ENCODE measurements at regions of chrX and their contacts with region 1.

Region 1: GRCh38 chrX:154428176-154429010 is at the start of gene ATP6AP1:
- DNase-seq: peak; percentile 85
- ATAC-seq: peak; percentile 99
- H3K4me3 ChIP-seq: peak within 1 kb of the TSS; percentile 64 to 74 (median 72)
- H3K27ac ChIP-seq: peak within 1 kb of the TSS; percentile 54
- H3K4me1 ChIP-seq: peaks cover 33% of the 10 kb centered on the region
- H3K27me3 ChIP-seq: no peaks in the 10 kb centered on the region
- CTCF ChIP-seq: no peak
- EP300 ChIP-seq: no peak
- POLR2A ChIP-seq: no peak
- RAD21 ChIP-seq: no peak
- total RNA-seq, gene ATP6AP1: 23.1 and 56.7 TPM in 2 replicates

Region 2: GRCh38 chrX:154327038-154327820 is 101.2 kb before region 1 on chrX:
- CTCF ChIA-PET with region 1: no interaction called
- POLR2A ChIA-PET with region 1: no interaction called
- in situ Hi-C with region 1: no loop called
- intact Hi-C with region 1: no loop called
- DNase-seq: no peak
- ATAC-seq: no peak
- H3K4me3 ChIP-seq: no peak overlapping the region
- H3K27ac ChIP-seq: no peak overlapping the region
- H3K4me1 ChIP-seq: no peaks in the 10 kb centered on the region
- H3K27me3 ChIP-seq: peaks cover 2 to 41% of the 10 kb centered on the region in 2 experiments; a peak in 4 of 5 replicates
- CTCF ChIP-seq: no peak
- EP300 ChIP-seq: no peak
- POLR2A ChIP-seq: no peak
- RAD21 ChIP-seq: no peak

Region 3: GRCh38 chrX:154411322-154411980 is 16.9 kb before region 1 on chrX and contains the start of gene TAFAZZIN:
- CTCF ChIA-PET with region 1: no interaction called
- POLR2A ChIA-PET with region 1: interaction called, 17 read pairs
- in situ Hi-C with region 1: no loop called
- intact Hi-C with region 1: no loop called
- DNase-seq: peak; percentile 21
- ATAC-seq: peak; percentile 58
- H3K4me3 ChIP-seq: peak within 1 kb of the TSS; percentile 57 to 73 (median 72)
- H3K27ac ChIP-seq: peak within 1 kb of the TSS; percentile 67
- H3K4me1 ChIP-seq: peaks cover 25% of the 10 kb centered on the region
- H3K27me3 ChIP-seq: no peaks in the 10 kb centered on the region
- CTCF ChIP-seq: no peak
- EP300 ChIP-seq: no peak
- POLR2A ChIP-seq: peak; percentile 33 to 78; a peak in 3 of 4 replicates
- RAD21 ChIP-seq: no peak
- total RNA-seq, gene TAFAZZIN: 6.3 and 16.8 TPM in 2 replicates

Region 4: DNA sequence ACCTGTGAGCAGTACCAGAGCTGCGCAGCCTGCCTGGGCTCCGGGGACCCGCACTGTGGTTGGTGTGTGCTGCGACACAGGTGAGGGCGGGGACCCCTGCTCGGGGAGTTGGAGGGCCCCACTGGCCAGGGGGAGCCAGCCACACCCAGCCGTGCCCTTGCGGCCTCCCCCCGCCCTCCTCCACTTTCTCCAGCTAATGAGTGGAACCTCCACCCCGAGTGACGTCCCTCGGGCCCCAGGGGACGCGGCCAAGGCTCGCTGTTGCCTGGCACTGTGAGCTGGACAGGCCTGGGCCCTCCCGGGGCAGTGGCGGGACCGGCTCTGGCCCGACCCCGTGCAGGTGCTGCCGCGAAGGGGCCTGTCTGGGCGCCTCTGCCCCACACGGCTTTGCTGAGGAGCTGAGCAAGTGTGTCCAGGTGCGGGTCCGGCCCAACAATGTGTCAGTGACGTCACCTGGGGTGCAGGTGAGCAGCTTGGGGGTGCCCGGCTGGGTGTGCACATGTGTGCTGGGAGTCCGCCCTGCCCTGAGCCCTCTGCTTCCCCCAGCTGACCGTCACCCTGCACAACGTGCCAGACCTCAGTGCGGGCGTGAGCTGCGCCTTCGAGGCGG is 35.3 kb after region 1 on chrX:
- CTCF ChIA-PET with region 1: no interaction called
- POLR2A ChIA-PET with region 1: no interaction called
- in situ Hi-C with region 1: no loop called
- intact Hi-C with region 1: no loop called
- DNase-seq: no peak
- ATAC-seq: no peak
- H3K4me3 ChIP-seq: no peak overlapping the region
- H3K27ac ChIP-seq: no peak overlapping the region
- H3K4me1 ChIP-seq: 0 out of 2 replicates have a peak, but pooled peaks cover 4% of the 10 kb centered on the region
- H3K27me3 ChIP-seq: no peaks in the 10 kb centered on the region
- CTCF ChIP-seq: no peak
- EP300 ChIP-seq: no peak
- POLR2A ChIP-seq: no peak
- RAD21 ChIP-seq: no peak

Measured in HepG2 (cell line).